HepG2 (cell line): ENCODE measurements at regions of chr6 and their contacts with region 1.

Region 1: GRCh38 chr6:25660512-25660911 is 8.5 kb downstream of the SCGN start:
- DNase-seq: peak; percentile 75
- ATAC-seq: peak; percentile 98
- H3K4me3 ChIP-seq: no peak overlapping the region; a peak in 2 of 6 replicates
- H3K27ac ChIP-seq: peak overlapping the region; percentile 31
- H3K4me1 ChIP-seq: peaks cover 42% of the 10 kb centered on the region
- H3K27me3 ChIP-seq: no peaks in the 10 kb centered on the region
- CTCF ChIP-seq: no peak
- EP300 ChIP-seq: peak in 1 of 2 experiments; percentile 73; a peak in 1 of 4 replicates
- POLR2A ChIP-seq: no peak
- RAD21 ChIP-seq: no peak

Region 2: GRCh38 chr6:25637960-25638434 is 22.5 kb before region 1 on chr6:
- CTCF ChIA-PET with region 1: no interaction called
- POLR2A ChIA-PET with region 1: interaction called, 53 read pairs
- in situ Hi-C with region 1: no loop called
- intact Hi-C with region 1: loop called (anchors 2 kb)
- DNase-seq: peak; percentile 38
- ATAC-seq: peak; percentile 6
- H3K4me3 ChIP-seq: no peak overlapping the region
- H3K27ac ChIP-seq: peak overlapping the region; percentile 73
- H3K4me1 ChIP-seq: peaks cover 89% of the 10 kb centered on the region
- H3K27me3 ChIP-seq: no peaks in the 10 kb centered on the region
- CTCF ChIP-seq: peak; percentile 57
- EP300 ChIP-seq: no peak
- POLR2A ChIP-seq: no peak
- RAD21 ChIP-seq: no peak

Region 3: DNA sequence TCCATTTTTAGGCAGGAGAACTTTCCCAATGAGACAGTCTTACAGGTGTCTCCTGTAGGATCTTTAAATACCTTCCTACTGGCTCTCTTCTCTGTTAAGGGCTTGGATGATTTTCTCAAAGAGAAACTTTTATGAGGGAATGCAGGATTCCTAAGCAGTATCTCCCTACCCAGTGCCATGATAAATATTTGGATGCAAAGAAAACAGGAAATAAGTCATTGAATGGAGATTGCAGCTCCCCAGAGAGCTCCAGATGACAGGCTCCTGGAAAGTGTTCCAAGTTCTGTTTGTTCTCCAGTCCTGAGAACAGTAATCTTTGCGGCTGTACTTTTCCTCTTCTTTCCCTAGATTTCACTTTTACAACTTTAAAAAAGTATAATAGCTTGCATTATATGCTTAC is 10.9 kb before region 1 on chr6:
- CTCF ChIA-PET with region 1: no interaction called
- POLR2A ChIA-PET with region 1: interaction called, 3 read pairs
- in situ Hi-C with region 1: no loop called
- intact Hi-C with region 1: loop called (anchors 1 kb)
- DNase-seq: no peak
- ATAC-seq: no peak
- H3K4me3 ChIP-seq: no peak overlapping the region
- H3K27ac ChIP-seq: no peak overlapping the region
- H3K4me1 ChIP-seq: peaks cover 32% of the 10 kb centered on the region
- H3K27me3 ChIP-seq: no peaks in the 10 kb centered on the region
- CTCF ChIP-seq: no peak
- EP300 ChIP-seq: no peak
- POLR2A ChIP-seq: no peak
- RAD21 ChIP-seq: no peak